PC-3 (cell line): ENCODE measurements at regions of chr13 and their contacts with region 1.

Region 1: GRCh38 chr13:51583875-51584730 is at the start of gene WDFY2:
- DNase-seq: peak; percentile 98
- ATAC-seq: peak; percentile 75
- H3K4me3 ChIP-seq: peak within 1 kb of the TSS; percentile 90
- H3K27ac ChIP-seq: peak within 1 kb of the TSS; percentile 60
- H3K4me1 ChIP-seq: peaks cover 17% of the 10 kb centered on the region
- H3K27me3 ChIP-seq: no peaks in the 10 kb centered on the region
- CTCF ChIP-seq: no peak
- total RNA-seq, gene WDFY2: 4.1 and 5.9 TPM in 2 replicates

Region 2: GRCh38 chr13:51435002-51435578 is 149.0 kb before region 1 on chr13:
- CTCF ChIA-PET with region 1: no interaction called
- POLR2A ChIA-PET with region 1: no interaction called
- intact Hi-C with region 1: loop called (anchors 5 kb)
- DNase-seq: peak; percentile 50
- ATAC-seq: no peak; the same call in 1 of the 2 replicates
- H3K4me3 ChIP-seq: no peak overlapping the region
- H3K27ac ChIP-seq: no peak overlapping the region
- H3K4me1 ChIP-seq: no peaks in the 10 kb centered on the region
- H3K27me3 ChIP-seq: no peaks in the 10 kb centered on the region
- CTCF ChIP-seq: peak; percentile 54

Region 3: DNA sequence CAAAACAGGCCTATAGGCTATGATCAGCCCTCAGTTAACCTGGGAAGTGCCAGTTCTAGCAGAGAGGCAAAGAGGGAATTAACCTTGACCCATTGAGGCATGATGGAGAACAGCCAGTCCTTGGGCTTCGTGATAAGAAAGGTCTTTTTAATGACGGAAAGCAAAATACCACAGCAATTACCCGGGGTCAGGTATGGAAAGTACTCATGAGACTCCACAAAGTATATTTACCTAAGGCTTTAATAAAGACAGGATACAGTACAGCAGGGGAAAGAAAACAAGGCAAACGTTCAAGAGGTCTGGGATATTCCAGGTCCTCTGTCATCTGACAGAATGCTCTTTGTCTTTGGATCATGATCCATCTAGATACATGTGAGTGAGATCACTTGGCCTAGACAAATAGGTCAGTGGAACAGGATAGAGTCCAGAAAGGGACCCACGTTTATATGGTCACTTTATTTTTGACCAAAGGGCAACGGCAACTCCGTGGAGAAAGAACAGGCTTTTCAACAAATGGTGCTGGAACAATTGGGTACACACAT is 52.3 kb after region 1 on chr13:
- CTCF ChIA-PET with region 1: interaction called, 7 read pairs
- POLR2A ChIA-PET with region 1: no interaction called
- intact Hi-C with region 1: loop called (anchors 2 kb)
- DNase-seq: peak; percentile 72
- ATAC-seq: peak; percentile 67
- H3K4me3 ChIP-seq: no peak overlapping the region; the same call in 1 of the 2 replicates
- H3K27ac ChIP-seq: peak overlapping the region; percentile 92
- H3K4me1 ChIP-seq: peaks cover 67% of the 10 kb centered on the region
- H3K27me3 ChIP-seq: no peaks in the 10 kb centered on the region
- CTCF ChIP-seq: no peak

Region 4: DNA sequence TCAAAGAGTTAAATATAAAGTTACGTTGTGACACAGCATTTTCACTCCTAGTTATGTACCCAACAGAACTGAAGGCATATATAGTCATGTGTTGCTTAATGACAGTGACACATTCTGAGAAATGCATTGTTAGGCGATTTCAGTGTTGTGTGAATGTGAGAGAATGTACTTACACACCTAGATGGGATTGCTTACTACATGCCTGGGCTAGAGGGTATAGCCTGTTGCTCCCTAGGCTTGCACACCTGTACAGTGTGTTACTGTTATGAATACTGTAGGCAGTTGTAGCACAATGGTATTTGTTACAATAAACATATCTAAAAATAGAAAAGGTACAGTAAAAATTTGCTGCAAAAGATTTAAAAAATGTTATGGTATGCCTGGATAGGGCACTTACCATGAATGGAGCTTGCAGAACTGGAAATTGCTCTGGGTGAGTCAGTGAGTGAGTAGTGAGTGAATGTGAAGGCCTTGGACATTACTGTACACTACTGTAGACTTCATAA is 130.6 kb after region 1 on chr13:
- CTCF ChIA-PET with region 1: no interaction called
- POLR2A ChIA-PET with region 1: no interaction called
- intact Hi-C with region 1: loop called (anchors 1 kb)
- DNase-seq: peak; percentile 82
- ATAC-seq: peak; percentile 94
- H3K4me3 ChIP-seq: no peak overlapping the region
- H3K27ac ChIP-seq: peak overlapping the region; percentile 81
- H3K4me1 ChIP-seq: peaks cover 23% of the 10 kb centered on the region
- H3K27me3 ChIP-seq: no peaks in the 10 kb centered on the region
- CTCF ChIP-seq: no peak

Region 5: GRCh38 chr13:51797664-51798488 is 213.8 kb after region 1 on chr13:
- CTCF ChIA-PET with region 1: interaction called, 8 read pairs
- POLR2A ChIA-PET with region 1: no interaction called
- intact Hi-C with region 1: loop called (anchors 2 kb)
- DNase-seq: peak; percentile 83
- ATAC-seq: peak; percentile 69
- H3K4me3 ChIP-seq: no peak overlapping the region
- H3K27ac ChIP-seq: no peak overlapping the region
- H3K4me1 ChIP-seq: peaks cover 29% of the 10 kb centered on the region
- H3K27me3 ChIP-seq: no peaks in the 10 kb centered on the region
- CTCF ChIP-seq: peak; percentile 71